Spleen (tissue), 13 donors: ENCODE measurements at regions of chr6 and their contacts with region 1.

Region 1: GRCh38 chr6:44172731-44173500 is 14.3 kb downstream of the CAPN11 start:
- DNase-seq: peak; percentile 92
- H3K4me3 ChIP-seq: no peak overlapping the region
- H3K27ac ChIP-seq: no peak overlapping the region
- H3K4me1 ChIP-seq: peaks cover 3 to 19% (median 16%) of the 10 kb centered on the region in 6 donors
- H3K27me3 ChIP-seq: peaks cover 0 to 5% (median 0%) of the 10 kb centered on the region in 7 donors
- CTCF ChIP-seq: peak; percentile 71 to 94 (median 88)
- POLR2A ChIP-seq: no peak

Region 2: GRCh38 chr6:44096612-44097011 is 76.3 kb before region 1 on chr6:
- intact Hi-C with region 1: no loop called
- DNase-seq: peak; percentile 91
- H3K4me3 ChIP-seq: no peak overlapping the region
- H3K27ac ChIP-seq: no peak overlapping the region
- H3K4me1 ChIP-seq: peaks cover 0 to 8% (median 0%) of the 10 kb centered on the region in 6 donors
- H3K27me3 ChIP-seq: no peaks in the 10 kb centered on the region
- CTCF ChIP-seq: peak; percentile 78 to 95 (median 90)
- POLR2A ChIP-seq: no peak

Region 3: GRCh38 chr6:44237813-44238433 is 65.0 kb after region 1 on chr6:
- intact Hi-C with region 1: loop called (anchors 10 kb)
- DNase-seq: peak; percentile 96
- H3K4me3 ChIP-seq: peak overlapping the region; percentile 34 to 79 (median 50)
- H3K27ac ChIP-seq: peak overlapping the region; percentile 84 to 97 (median 94)
- H3K4me1 ChIP-seq: peaks cover 9 to 59% (median 26%) of the 10 kb centered on the region in 6 donors
- H3K27me3 ChIP-seq: no peaks in the 10 kb centered on the region
- CTCF ChIP-seq: peak; percentile 94 to 99 (median 98)
- POLR2A ChIP-seq: peak in 2 of 3 donors; percentile 5 to 9

Region 4: GRCh38 chr6:44338228-44339122 is 165.6 kb after region 1 on chr6:
- intact Hi-C with region 1: loop called (anchors 5 kb)
- DNase-seq: peak; percentile 74
- H3K4me3 ChIP-seq: no peak overlapping the region
- H3K27ac ChIP-seq: no peak overlapping the region
- H3K4me1 ChIP-seq: peaks cover 0 to 17% (median 7%) of the 10 kb centered on the region in 6 donors
- H3K27me3 ChIP-seq: peaks cover 0 to 28% (median 21%) of the 10 kb centered on the region in 7 donors
- CTCF ChIP-seq: peak; percentile 58 to 85 (median 75)
- POLR2A ChIP-seq: no peak